Heart right ventricle (tissue), 16 donors: ENCODE measurements at regions of chr11 and their contacts with region 1.

Region 1: DNA sequence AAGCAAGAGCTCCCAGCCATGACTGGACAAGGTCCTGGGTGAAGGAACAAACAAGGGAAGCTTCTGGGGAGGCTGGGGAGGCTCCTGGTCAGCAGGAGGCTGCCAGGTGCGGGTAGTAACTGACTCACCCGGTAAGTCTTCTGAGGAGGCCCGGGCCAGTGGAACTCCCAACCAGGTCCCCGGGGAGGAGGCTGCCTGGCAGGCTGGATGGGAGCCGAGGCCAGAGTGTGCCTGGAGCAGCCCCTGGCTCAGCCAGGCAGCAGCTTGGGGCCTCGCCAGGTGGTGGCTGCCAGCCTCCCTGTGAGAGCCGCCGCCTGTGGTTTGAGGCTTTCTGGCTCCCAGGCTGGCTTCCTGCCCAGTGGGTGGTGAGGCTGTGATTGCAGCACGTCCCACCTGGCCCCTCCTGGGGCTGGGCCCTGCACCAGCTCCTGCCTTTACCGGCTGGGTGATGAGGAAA is 46.2 kb downstream of the IGF2 start:
- DNase-seq: peak; percentile 76 to 86
- ATAC-seq: peak; percentile 37 to 88 (median 74)
- H3K4me3 ChIP-seq: no peak overlapping the region
- H3K27ac ChIP-seq: peak overlapping the region in 1 of 10 donors; percentile 27
- H3K4me1 ChIP-seq: peaks cover 12 to 41% (median 32%) of the 10 kb centered on the region in 9 donors
- H3K27me3 ChIP-seq: no peaks in the 10 kb centered on the region
- CTCF ChIP-seq: no peak

Region 2: GRCh38 chr11:2137202-2138071 is 44.5 kb after region 1 on chr11:
- intact Hi-C with region 1: loop called in 3 of 10 experiments (anchors 5 kb)
- DNase-seq: peak; percentile 72 to 83
- ATAC-seq: peak; percentile 71 to 92 (median 84)
- H3K4me3 ChIP-seq: peak overlapping the region; percentile 12 to 61 (median 52)
- H3K27ac ChIP-seq: peak overlapping the region in 8 of 10 donors; percentile 46 to 84 (median 80)
- H3K4me1 ChIP-seq: peaks cover 0 to 40% (median 6%) of the 10 kb centered on the region in 9 donors
- H3K27me3 ChIP-seq: peaks cover 10 to 94% (median 69%) of the 10 kb centered on the region in 7 donors
- CTCF ChIP-seq: no peak

Region 3: DNA sequence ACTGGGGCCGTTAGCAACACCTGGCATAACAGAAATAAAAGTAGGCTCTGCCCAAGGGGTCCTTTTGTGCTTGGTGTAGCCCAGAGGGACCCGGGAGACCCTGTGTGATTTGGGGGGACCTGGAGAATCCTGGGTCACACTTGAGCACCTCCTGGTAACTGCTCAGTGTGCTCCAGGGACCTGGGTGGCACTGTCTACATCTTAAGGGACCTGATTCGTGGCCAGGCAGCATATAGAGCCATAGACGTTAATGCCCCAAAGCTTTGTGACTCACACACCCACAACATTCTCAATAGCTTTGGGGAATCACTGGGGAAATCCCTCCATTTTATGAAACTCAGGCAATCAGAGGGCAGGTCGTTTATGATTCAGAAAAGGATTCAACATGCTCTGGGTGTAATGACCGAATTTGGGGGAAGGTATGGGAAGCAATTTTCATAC is 49.8 kb after region 1 on chr11:
- intact Hi-C with region 1: loop called in 2 of 10 experiments (anchors 5 kb)
- DNase-seq: no peak
- ATAC-seq: no peak
- H3K4me3 ChIP-seq: no peak overlapping the region
- H3K27ac ChIP-seq: no peak overlapping the region
- H3K4me1 ChIP-seq: peaks cover 4 to 25% (median 13%) of the 10 kb centered on the region in 9 donors
- H3K27me3 ChIP-seq: peaks cover 34 to 96% (median 90%) of the 10 kb centered on the region in 7 donors
- CTCF ChIP-seq: no peak

Region 4: GRCh38 chr11:2156416-2157182 is 63.6 kb after region 1 on chr11:
- intact Hi-C with region 1: no loop called
- DNase-seq: peak; percentile 64 to 75
- ATAC-seq: peak; percentile 32 to 74 (median 54)
- H3K4me3 ChIP-seq: no peak overlapping the region
- H3K27ac ChIP-seq: no peak overlapping the region
- H3K4me1 ChIP-seq: peaks cover 2 to 20% (median 4%) of the 10 kb centered on the region in 9 donors
- H3K27me3 ChIP-seq: peaks cover 0 to 20% (median 0%) of the 10 kb centered on the region in 7 donors
- CTCF ChIP-seq: peak; percentile 69 to 86 (median 82)

Region 5: GRCh38 chr11:2314525-2315394 is 221.8 kb after region 1 on chr11:
- intact Hi-C with region 1: no loop called
- DNase-seq: peak; percentile 91 to 95
- ATAC-seq: peak; percentile 78 to 91 (median 88)
- H3K4me3 ChIP-seq: peak overlapping the region in 6 of 10 donors; percentile 4 to 33 (median 22)
- H3K27ac ChIP-seq: peak overlapping the region; percentile 68 to 92 (median 86)
- H3K4me1 ChIP-seq: peaks cover 13 to 47% (median 31%) of the 10 kb centered on the region in 9 donors
- H3K27me3 ChIP-seq: no peaks in the 10 kb centered on the region
- CTCF ChIP-seq: no peak

Region 6: GRCh38 chr11:2737866-2738265 is 644.9 kb after region 1 on chr11:
- intact Hi-C with region 1: no loop called
- DNase-seq: peak in 1 of 2 donors; percentile 42
- ATAC-seq: peak in 5 of 8 donors; percentile 7 to 48 (median 38)
- H3K4me3 ChIP-seq: no peak overlapping the region
- H3K27ac ChIP-seq: no peak overlapping the region
- H3K4me1 ChIP-seq: peaks cover 0 to 34% (median 19%) of the 10 kb centered on the region in 9 donors
- H3K27me3 ChIP-seq: no peaks in the 10 kb centered on the region
- CTCF ChIP-seq: no peak

Region 7: GRCh38 chr11:3767536-3767935 is 1674.6 kb after region 1 on chr11:
- intact Hi-C with region 1: loop called in 1 of 10 experiments (anchors 10 kb)
- DNase-seq: no peak
- ATAC-seq: no peak
- H3K4me3 ChIP-seq: no peak overlapping the region
- H3K27ac ChIP-seq: no peak overlapping the region
- H3K4me1 ChIP-seq: no peaks in the 10 kb centered on the region
- H3K27me3 ChIP-seq: no peaks in the 10 kb centered on the region
- CTCF ChIP-seq: no peak